T-cell (primary cell): ENCODE measurements at regions of chr6 and their contacts with region 1.

Region 1: GRCh38 chr6:27825025-27825793 is 87.0 kb downstream of the OR2B2 start:
- DNase-seq: peak in 1 of 35 experiments; percentile 39
- ATAC-seq: no peak
- H3K4me3 ChIP-seq: peak overlapping the region; percentile 61 to 92
- H3K4me3 Mint-ChIP-seq: peak overlapping the region; percentile 80 to 90 (median 87)
- H3K27ac ChIP-seq: peak overlapping the region; percentile 89
- H3K27ac Mint-ChIP-seq: peak overlapping the region; percentile 89 to 96
- H3K4me1 ChIP-seq: peaks cover 6 to 12% of the 10 kb centered on the region in 2 experiments
- H3K4me1 Mint-ChIP-seq: peaks cover 36 to 39% (median 38%) of the 10 kb centered on the region in 3 donors
- H3K27me3 ChIP-seq: no peaks in the 10 kb centered on the region
- H3K27me3 Mint-ChIP-seq: no peaks in the 10 kb centered on the region

Region 2: GRCh38 chr6:27642744-27643456 is 182.3 kb before region 1 on chr6:
- CTCF ChIA-PET with region 1: no interaction called
- POLR2A ChIA-PET with region 1: no interaction called
- DNase-seq: no peak
- ATAC-seq: no peak
- H3K4me3 ChIP-seq: no peak overlapping the region
- H3K4me3 Mint-ChIP-seq: no peak overlapping the region
- H3K27ac ChIP-seq: no peak overlapping the region
- H3K27ac Mint-ChIP-seq: no peak overlapping the region
- H3K4me1 ChIP-seq: no peaks in the 10 kb centered on the region
- H3K4me1 Mint-ChIP-seq: no peaks in the 10 kb centered on the region
- H3K27me3 ChIP-seq: peaks cover 0 to 38% of the 10 kb centered on the region in 2 experiments
- H3K27me3 Mint-ChIP-seq: peaks cover 60 to 61% of the 10 kb centered on the region in 2 donors

Region 3: DNA sequence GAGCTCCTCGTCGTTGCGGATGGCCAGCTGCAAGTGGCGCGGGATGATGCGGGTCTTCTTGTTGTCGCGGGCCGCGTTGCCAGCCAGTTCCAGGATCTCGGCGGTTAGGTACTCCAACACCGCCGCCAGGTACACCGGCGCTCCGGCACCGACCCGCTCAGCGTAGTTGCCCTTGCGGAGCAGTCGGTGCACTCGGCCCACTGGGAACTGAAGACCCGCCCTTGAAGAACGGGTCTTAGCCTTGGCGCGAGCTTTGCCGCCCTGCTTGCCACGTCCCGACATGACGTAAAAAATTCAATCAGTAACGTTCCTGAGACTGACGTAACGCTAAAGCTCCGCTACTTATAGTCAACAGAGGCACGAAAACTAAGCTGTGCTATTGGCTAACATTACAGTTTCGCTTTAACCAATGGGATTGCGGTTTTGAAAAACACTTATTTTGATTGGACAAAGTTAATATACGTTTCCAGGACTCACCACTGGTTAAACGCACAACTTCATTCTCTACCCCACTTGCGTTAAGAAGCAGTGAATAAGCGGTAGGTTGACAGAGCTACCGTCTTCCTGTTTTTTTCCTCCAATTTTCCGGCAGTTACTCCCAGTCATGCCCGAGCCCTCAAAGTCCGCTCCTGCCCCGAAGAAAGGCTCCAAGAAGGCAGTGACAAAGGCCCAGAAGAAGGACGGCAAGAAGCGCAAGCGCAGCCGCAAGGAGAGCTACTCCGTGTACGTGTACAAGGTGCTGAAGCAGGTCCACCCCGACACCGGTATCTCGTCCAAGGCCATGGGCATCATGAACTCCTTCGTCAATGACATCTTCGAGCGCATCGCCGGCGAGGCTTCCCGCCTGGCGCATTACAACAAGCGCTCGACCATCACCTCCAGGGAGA is 13.1 kb after region 1 on chr6:
- CTCF ChIA-PET with region 1: interaction called in 1 of 2 experiments, 41 read pairs
- POLR2A ChIA-PET with region 1: interaction called, 21 to 87 read pairs
- DNase-seq: peak; percentile 62 to 97 (median 79)
- ATAC-seq: peak; percentile 80 to 83 (median 82)
- H3K4me3 ChIP-seq: peak overlapping the region; percentile 86 to 87
- H3K4me3 Mint-ChIP-seq: no peak overlapping the region
- H3K27ac ChIP-seq: peak overlapping the region; percentile 99
- H3K27ac Mint-ChIP-seq: no peak overlapping the region
- H3K4me1 ChIP-seq: peaks cover 14 to 28% of the 10 kb centered on the region in 2 experiments
- H3K4me1 Mint-ChIP-seq: peaks cover 9 to 20% (median 9%) of the 10 kb centered on the region in 3 donors
- H3K27me3 ChIP-seq: peaks cover 0 to 8% of the 10 kb centered on the region in 2 experiments
- H3K27me3 Mint-ChIP-seq: peaks cover 4 to 7% of the 10 kb centered on the region in 2 donors

Region 4: DNA sequence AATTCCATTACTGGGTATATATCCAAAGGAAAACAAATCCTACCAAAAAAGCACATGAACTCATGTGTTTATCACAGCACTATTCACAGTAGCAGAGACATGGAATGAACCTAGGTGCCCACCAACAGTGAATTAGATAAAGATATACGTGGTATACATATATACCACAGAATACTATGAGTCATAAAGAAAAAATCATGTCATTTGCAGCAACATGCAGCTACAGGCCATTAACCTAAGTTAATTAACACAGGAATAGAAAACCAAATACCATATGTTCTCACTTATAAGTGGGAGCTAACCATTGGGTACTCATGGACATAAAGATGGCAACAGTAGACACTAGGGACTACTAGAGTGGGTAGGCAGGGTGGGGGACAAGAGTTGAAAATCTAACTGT is 82.8 kb after region 1 on chr6:
- CTCF ChIA-PET with region 1: no interaction called
- POLR2A ChIA-PET with region 1: no interaction called
- DNase-seq: no peak
- ATAC-seq: no peak
- H3K4me3 ChIP-seq: no peak overlapping the region
- H3K4me3 Mint-ChIP-seq: no peak overlapping the region
- H3K27ac ChIP-seq: no peak overlapping the region
- H3K27ac Mint-ChIP-seq: no peak overlapping the region
- H3K4me1 ChIP-seq: peaks cover 0 to 6% of the 10 kb centered on the region in 2 experiments
- H3K4me1 Mint-ChIP-seq: peaks cover 0 to 7% (median 5%) of the 10 kb centered on the region in 3 donors
- H3K27me3 ChIP-seq: peaks cover 0 to 11% of the 10 kb centered on the region in 2 experiments
- H3K27me3 Mint-ChIP-seq: peaks cover 9 to 21% of the 10 kb centered on the region in 2 donors